Spleen (tissue), 13 donors: ENCODE measurements at regions of chr4 and their contacts with region 1.

Region 1: GRCh38 chr4:77203380-77204197 is 46.6 kb downstream of the CCNG2 start:
- DNase-seq: no peak
- H3K4me3 ChIP-seq: no peak overlapping the region
- H3K27ac ChIP-seq: no peak overlapping the region
- H3K4me1 ChIP-seq: peaks cover 0 to 9% (median 3%) of the 10 kb centered on the region in 6 donors
- H3K27me3 ChIP-seq: no peaks in the 10 kb centered on the region
- CTCF ChIP-seq: peak; percentile 55 to 85 (median 79)
- POLR2A ChIP-seq: no peak

Region 2: GRCh38 chr4:76430519-76431388 is 772.8 kb before region 1 on chr4:
- intact Hi-C with region 1: loop called (anchors 10 kb)
- DNase-seq: no peak
- H3K4me3 ChIP-seq: no peak overlapping the region
- H3K27ac ChIP-seq: no peak overlapping the region
- H3K4me1 ChIP-seq: peaks cover 0 to 13% (median 0%) of the 10 kb centered on the region in 6 donors
- H3K27me3 ChIP-seq: peaks cover 0 to 26% (median 3%) of the 10 kb centered on the region in 7 donors
- CTCF ChIP-seq: peak in 8 of 11 experiments; percentile 21 to 60 (median 48)
- POLR2A ChIP-seq: no peak

Region 3: GRCh38 chr4:76515975-76516843 is 687.4 kb before region 1 on chr4:
- intact Hi-C with region 1: loop called (anchors 10 kb)
- DNase-seq: no peak
- H3K4me3 ChIP-seq: no peak overlapping the region
- H3K27ac ChIP-seq: peak overlapping the region in 1 of 8 donors; percentile 26
- H3K4me1 ChIP-seq: peaks cover 0 to 11% (median 0%) of the 10 kb centered on the region in 6 donors
- H3K27me3 ChIP-seq: no peaks in the 10 kb centered on the region
- CTCF ChIP-seq: no peak
- POLR2A ChIP-seq: no peak

Region 4: DNA sequence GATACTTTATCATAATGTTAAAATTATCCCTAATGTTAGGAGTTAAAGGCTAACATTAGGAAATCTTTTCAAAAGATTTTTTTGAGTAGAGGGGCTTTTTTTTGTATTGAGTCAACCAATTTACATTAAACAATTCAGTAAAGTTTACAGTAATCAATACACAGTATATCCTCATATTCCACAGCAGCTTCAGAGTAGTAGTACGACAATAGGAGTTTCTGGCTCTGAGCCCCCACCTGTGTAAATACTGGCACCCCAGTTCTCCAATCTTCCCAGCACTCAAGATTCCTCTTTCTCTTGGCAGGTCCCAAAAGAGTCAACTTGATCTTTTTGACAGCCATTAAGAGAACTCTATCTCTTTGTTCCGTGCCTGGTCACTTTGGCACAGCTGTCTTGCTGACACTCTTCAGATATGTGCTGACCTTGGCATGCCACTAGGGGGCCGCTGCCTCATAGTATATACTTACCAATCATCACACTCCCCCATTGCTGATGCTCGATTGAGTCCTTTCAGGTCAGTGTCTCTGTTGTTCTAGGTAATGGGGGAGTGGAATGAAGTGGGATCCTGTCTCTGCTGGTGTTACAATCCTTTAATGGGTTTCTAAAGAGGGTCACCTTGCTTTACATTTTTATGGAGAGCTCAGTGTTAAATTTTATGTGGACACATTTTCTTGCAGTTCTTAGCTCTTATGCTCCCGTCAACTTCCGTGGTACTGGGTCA is 108.3 kb before region 1 on chr4:
- intact Hi-C with region 1: loop called (anchors 5 kb)
- DNase-seq: peak; percentile 93
- H3K4me3 ChIP-seq: no peak overlapping the region
- H3K27ac ChIP-seq: no peak overlapping the region
- H3K4me1 ChIP-seq: peaks cover under 1 to 31% (median 11%) of the 10 kb centered on the region in 6 donors
- H3K27me3 ChIP-seq: no peaks in the 10 kb centered on the region
- CTCF ChIP-seq: peak; percentile 60 to 90 (median 82)
- POLR2A ChIP-seq: no peak